ENCODE measurements at regions of chr9 and their contacts with region 1.

Region 1: GRCh38 chr9:93159601-93160471 is 24.1 kb upstream of the WNK2 start:
- DNase-seq: no peak
- H3K4me3 ChIP-seq: no peak overlapping the region
- H3K27me3 ChIP-seq: no peaks in the 10 kb centered on the region
- CTCF ChIP-seq: peak; percentile 99

Region 2: GRCh38 chr9:93183609-93184431 is 24.0 kb after region 1 on chr9 and contains the start of gene WNK2:
- CTCF ChIA-PET with region 1: no interaction called
- POLR2A ChIA-PET with region 1: no interaction called
- DNase-seq: no peak
- H3K4me3 ChIP-seq: no peak within 1 kb of the TSS; the same call in 1 of the 2 replicates
- H3K27me3 ChIP-seq: peaks cover 27% of the 10 kb centered on the region
- CTCF ChIP-seq: no peak
- polyA plus RNA-seq, gene WNK2: not detected in 2 replicates

Region 3: DNA sequence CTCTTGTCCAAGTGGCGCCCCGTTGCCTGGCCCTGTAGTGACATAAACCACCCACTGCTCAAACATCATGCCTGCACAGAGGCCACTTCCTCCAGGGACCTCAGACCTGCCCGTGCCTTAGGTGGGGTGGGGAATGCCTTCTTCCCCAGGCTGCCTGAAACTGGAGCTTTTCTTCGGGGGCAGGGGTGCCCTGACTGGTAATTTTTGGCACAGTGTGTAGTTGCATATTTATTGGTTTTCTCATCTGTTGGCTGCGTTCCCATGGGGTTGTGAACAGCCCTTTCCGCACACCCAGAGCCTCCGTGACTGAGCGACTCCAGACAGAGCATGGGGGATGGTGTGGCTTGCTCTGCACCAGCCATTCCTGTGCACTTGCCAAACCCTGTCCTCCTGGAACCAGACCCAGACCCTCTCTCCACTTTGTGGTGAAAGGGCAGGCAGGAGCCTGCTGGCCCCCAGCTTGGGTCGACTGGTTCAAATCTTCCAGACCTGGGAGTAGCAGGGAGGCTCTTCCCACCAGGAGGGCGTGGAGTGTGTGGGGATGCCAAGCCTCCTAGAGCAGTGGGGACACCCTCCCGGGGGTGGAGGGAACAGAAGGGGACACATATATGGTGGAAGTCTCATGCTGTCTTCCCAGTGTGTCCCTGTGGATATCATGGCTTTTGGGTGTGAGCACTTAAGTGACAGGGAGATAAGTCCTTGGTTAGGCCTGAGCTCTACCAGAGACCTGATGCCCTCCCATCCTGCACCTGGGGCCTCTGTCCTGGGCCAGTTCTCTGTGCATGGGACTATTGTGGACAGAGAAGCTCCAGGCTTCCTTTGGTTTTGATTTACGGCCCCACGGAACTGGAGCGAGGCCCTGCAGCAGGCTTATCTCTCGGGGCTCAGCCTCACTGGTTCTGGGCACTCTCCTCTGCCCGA is 63.7 kb after region 1 on chr9:
- CTCF ChIA-PET with region 1: no interaction called
- POLR2A ChIA-PET with region 1: no interaction called
- DNase-seq: peak; percentile 20
- H3K4me3 ChIP-seq: no peak overlapping the region
- H3K27me3 ChIP-seq: no peaks in the 10 kb centered on the region
- CTCF ChIP-seq: no peak

Region 4: GRCh38 chr9:93302551-93303257 is 142.9 kb after region 1 on chr9:
- CTCF ChIA-PET with region 1: interaction called, 33 read pairs
- POLR2A ChIA-PET with region 1: no interaction called
- DNase-seq: no peak
- H3K4me3 ChIP-seq: no peak overlapping the region
- H3K27me3 ChIP-seq: no peaks in the 10 kb centered on the region; the same call in 1 of the 2 replicates
- CTCF ChIP-seq: peak; percentile 67